K562 (cell line): ENCODE measurements at regions of chr6 and their contacts with region 1.

Region 1: DNA sequence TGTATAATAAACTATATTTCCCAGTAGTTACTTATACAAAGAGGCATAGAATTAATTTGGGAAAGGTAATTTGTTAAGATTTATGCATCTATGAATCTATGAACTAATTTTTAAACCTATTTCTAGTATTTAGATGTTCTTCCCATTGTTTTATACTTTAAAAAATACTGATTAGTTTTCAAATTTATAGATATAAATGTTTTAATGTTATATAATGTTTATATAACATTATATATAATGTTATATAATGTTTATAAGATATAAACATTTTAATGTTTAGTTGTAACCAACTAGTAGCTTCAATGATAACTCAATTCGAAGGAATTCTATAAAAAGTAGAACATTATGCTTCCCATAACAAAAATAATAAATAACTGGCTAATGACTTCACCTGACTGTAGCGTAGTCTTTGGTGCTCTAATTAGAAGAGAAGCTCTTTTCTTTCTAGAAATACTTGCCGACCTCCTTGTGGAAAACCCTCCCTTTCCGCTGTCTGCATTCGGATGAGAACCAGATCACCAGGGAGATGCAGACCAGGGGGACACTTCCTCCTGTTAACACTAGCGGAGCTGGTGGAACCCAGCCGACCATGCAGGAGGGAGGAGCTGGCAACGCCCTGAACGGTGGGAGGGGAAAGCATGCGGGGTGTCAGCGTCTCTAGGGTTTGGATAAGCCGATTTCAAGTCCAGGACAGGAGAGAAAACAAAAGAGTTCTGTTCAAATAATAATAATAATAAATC is 158.4 kb downstream of the OR2B2 start:
- DNase-seq: peak; percentile 84 to 98 (median 89)
- ATAC-seq: peak; percentile 93
- H3K4me3 ChIP-seq: peak overlapping the region; percentile 67
- H3K27ac ChIP-seq: peak overlapping the region; percentile 44; the same call in 2 of the 3 replicates
- H3K4me1 ChIP-seq: peaks cover 14 to 16% of the 10 kb centered on the region in 2 experiments; a peak in 4 of 5 replicates
- H3K27me3 ChIP-seq: no peaks in the 10 kb centered on the region
- CTCF ChIP-seq: peak; percentile 49 to 61 (median 55)
- EP300 ChIP-seq: peak; percentile 13
- POLR2A ChIP-seq: peak; percentile 67
- RAD21 ChIP-seq: peak in 1 of 2 experiments; percentile 30; a peak in 1 of 4 replicates

Region 2: GRCh38 chr6:27188885-27189418 is 564.9 kb before region 1 on chr6:
- CTCF ChIA-PET with region 1: interaction called, 4 read pairs
- POLR2A ChIA-PET with region 1: no interaction called
- in situ Hi-C with region 1: no loop called
- intact Hi-C with region 1: loop called (anchors 1 kb)
- DNase-seq: peak; percentile 69 to 93 (median 78)
- ATAC-seq: peak; percentile 85
- H3K4me3 ChIP-seq: peak overlapping the region; percentile 56
- H3K27ac ChIP-seq: peak overlapping the region; percentile 80
- H3K4me1 ChIP-seq: peaks cover 8% of the 10 kb centered on the region in 2 experiments; a peak in 4 of 5 replicates
- H3K27me3 ChIP-seq: no peaks in the 10 kb centered on the region
- CTCF ChIP-seq: peak; percentile 78 to 92 (median 85)
- EP300 ChIP-seq: no peak; the same call in 1 of the 2 replicates
- POLR2A ChIP-seq: no peak
- RAD21 ChIP-seq: peak; percentile 93 to 95

Region 3: GRCh38 chr6:27518881-27519795 is 234.7 kb before region 1 on chr6:
- CTCF ChIA-PET with region 1: interaction called, 11 read pairs
- POLR2A ChIA-PET with region 1: interaction called, 3 read pairs
- in situ Hi-C with region 1: no loop called
- intact Hi-C with region 1: loop called (anchors 1 kb)
- DNase-seq: peak; percentile 66 to 93 (median 69)
- ATAC-seq: peak; percentile 89
- H3K4me3 ChIP-seq: peak overlapping the region; percentile 69
- H3K27ac ChIP-seq: peak overlapping the region; percentile 82
- H3K4me1 ChIP-seq: peaks cover 4 to 7% of the 10 kb centered on the region in 2 experiments; a peak in 3 of 5 replicates
- H3K27me3 ChIP-seq: no peaks in the 10 kb centered on the region
- CTCF ChIP-seq: peak; percentile 77 to 90 (median 86)
- EP300 ChIP-seq: peak; percentile 63
- POLR2A ChIP-seq: peak; percentile 66
- RAD21 ChIP-seq: peak; percentile 76 to 80

Region 4: DNA sequence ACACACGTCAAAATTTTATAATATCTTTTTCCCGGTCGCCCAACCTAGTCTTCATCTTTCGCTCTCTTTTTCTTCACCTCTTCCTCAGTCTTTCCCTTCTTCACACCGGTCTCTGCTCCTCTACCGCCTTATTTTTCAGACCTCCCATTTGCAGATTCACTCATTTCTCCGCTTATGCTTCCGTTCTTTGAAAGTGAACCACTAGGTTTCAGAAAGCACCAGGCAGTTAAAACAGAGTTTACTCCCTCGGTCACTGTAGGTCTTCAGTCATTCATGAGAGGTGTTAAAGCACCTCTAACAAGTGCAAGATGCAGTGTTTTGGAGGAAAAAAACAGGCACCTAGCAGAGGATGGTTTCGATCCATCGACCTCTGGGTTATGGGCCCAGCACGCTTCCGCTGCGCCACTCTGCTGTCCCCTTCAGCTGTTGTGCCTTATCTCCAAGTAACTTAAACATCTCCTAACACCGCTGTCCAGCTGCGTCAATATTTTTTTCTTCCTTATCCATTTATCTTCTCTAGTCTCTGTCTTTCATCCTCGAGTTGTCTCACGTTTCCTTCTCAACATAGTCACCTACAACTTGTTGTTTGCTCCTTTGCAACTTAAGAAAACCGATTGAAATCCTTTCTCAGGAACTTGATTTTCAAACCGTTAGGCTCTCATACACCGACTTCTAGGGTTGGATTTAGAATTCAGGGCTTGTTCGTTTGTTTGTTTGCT is 161.2 kb before region 1 on chr6:
- CTCF ChIA-PET with region 1: interaction called, 4 read pairs
- POLR2A ChIA-PET with region 1: no interaction called
- in situ Hi-C with region 1: no loop called
- intact Hi-C with region 1: loop called (anchors 2 kb)
- DNase-seq: peak; percentile 76 to 94 (median 86)
- ATAC-seq: peak; percentile 94
- H3K4me3 ChIP-seq: peak overlapping the region; percentile 48
- H3K27ac ChIP-seq: peak overlapping the region; percentile 53
- H3K4me1 ChIP-seq: peaks cover 8 to 13% of the 10 kb centered on the region in 2 experiments; a peak in 4 of 5 replicates
- H3K27me3 ChIP-seq: no peaks in the 10 kb centered on the region
- CTCF ChIP-seq: peak in 1 of 3 experiments; percentile 20; a peak in 2 of 6 replicates
- EP300 ChIP-seq: peak; percentile 84
- POLR2A ChIP-seq: no peak
- RAD21 ChIP-seq: peak; percentile 33 to 47; a peak in 3 of 4 replicates

Region 5: DNA sequence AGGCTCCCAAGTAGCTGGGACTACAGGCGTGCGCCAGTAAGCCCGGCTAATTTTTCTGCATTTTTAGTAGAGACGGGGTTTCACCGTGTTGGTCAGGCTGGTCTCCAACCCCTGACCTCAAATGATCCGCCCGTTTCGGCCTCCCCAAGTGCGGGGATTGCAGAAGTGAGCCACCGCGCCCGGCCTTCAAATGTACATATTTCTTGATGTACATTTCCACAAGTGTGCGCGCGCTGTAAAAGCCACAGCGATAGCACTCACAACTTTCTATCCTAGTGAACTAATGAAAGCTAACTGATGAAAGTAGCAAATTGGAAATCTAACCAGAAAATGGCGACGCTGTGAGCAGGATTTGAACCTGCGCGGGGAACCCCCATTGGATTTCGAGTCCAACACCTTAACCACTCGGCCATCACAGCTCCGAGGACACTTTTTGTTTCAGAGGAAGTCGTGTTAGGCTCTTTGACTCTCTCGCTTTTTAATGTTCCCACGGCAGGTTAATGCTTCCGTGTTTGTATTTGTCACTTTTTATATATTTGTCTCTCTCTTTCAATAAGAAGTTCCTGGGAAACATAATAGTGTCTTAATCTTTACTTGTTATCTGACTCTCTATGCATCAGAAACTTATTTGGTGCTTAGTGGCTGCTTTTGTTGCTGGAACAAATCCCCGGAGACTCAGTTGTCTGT is 81.6 kb before region 1 on chr6:
- CTCF ChIA-PET with region 1: no interaction called
- POLR2A ChIA-PET with region 1: no interaction called
- in situ Hi-C with region 1: no loop called
- intact Hi-C with region 1: loop called (anchors 2 kb)
- DNase-seq: peak; percentile 59 to 96 (median 70)
- ATAC-seq: peak; percentile 72
- H3K4me3 ChIP-seq: peak overlapping the region; percentile 53
- H3K27ac ChIP-seq: peak overlapping the region; percentile 82
- H3K4me1 ChIP-seq: peaks cover 7% of the 10 kb centered on the region in 2 experiments; a peak in 4 of 5 replicates
- H3K27me3 ChIP-seq: no peaks in the 10 kb centered on the region
- CTCF ChIP-seq: no peak
- EP300 ChIP-seq: peak; percentile 70
- POLR2A ChIP-seq: no peak
- RAD21 ChIP-seq: peak in 1 of 2 experiments; percentile 31; a peak in 2 of 4 replicates

Region 6: GRCh38 chr6:27700337-27700736 is 53.5 kb before region 1 on chr6:
- CTCF ChIA-PET with region 1: no interaction called
- POLR2A ChIA-PET with region 1: no interaction called
- in situ Hi-C with region 1: no loop called
- intact Hi-C with region 1: no loop called
- DNase-seq: no peak
- ATAC-seq: no peak
- H3K4me3 ChIP-seq: no peak overlapping the region
- H3K27ac ChIP-seq: no peak overlapping the region
- H3K4me1 ChIP-seq: no peaks in the 10 kb centered on the region
- H3K27me3 ChIP-seq: no peaks in the 10 kb centered on the region
- CTCF ChIP-seq: no peak
- EP300 ChIP-seq: no peak
- POLR2A ChIP-seq: no peak
- RAD21 ChIP-seq: no peak

Region 7: GRCh38 chr6:27772261-27773001 is 18.6 kb after region 1 on chr6:
- CTCF ChIA-PET with region 1: no interaction called
- POLR2A ChIA-PET with region 1: interaction called, 17 read pairs
- in situ Hi-C with region 1: no loop called
- intact Hi-C with region 1: no loop called
- DNase-seq: peak; percentile 83 to 95 (median 84)
- ATAC-seq: peak; percentile 92
- H3K4me3 ChIP-seq: no peak overlapping the region
- H3K27ac ChIP-seq: peak overlapping the region; percentile 75
- H3K4me1 ChIP-seq: peaks cover 22 to 40% of the 10 kb centered on the region in 2 experiments
- H3K27me3 ChIP-seq: no peaks in the 10 kb centered on the region
- CTCF ChIP-seq: peak; percentile 97 to 99 (median 97)
- EP300 ChIP-seq: peak; percentile 35
- POLR2A ChIP-seq: no peak
- RAD21 ChIP-seq: peak; percentile 94 to 97

Region 8: DNA sequence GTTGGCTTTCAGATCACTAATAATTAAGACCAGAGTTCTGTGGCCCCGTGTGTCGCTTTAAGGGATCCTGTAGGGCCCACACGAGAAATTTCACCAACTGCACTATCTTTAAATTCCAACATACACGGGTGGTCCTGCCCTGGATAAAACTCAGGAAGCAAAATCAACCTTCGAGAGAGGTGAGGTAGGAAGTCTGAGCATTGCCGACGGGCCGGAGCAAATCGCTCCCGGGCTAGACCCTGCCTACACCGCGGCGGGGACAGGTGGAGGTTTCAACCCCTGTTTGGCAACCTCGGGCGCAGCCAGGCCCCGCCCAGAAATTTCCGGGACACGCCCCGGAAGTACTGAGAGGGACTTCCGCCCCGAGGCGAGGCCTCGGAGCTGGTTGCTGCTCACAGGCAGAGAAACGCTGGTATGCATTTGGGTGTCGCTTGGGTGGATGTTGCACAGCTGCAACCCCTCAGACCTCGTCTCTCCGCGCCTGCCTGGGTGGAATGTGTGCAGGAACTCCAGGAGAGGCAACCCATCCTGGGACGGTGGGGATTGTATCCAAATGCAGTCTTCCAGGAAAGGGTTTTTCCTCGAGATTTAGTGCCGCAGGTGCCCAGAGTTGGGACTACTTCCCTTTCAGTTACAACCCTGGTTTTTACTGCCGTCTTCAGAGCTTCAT is 407.7 kb after region 1 on chr6:
- CTCF ChIA-PET with region 1: no interaction called
- POLR2A ChIA-PET with region 1: no interaction called
- in situ Hi-C with region 1: no loop called
- intact Hi-C with region 1: no loop called
- DNase-seq: peak; percentile 89 to 95 (median 92)
- ATAC-seq: peak; percentile 98
- H3K4me3 ChIP-seq: peak overlapping the region; percentile 43
- H3K27ac ChIP-seq: peak overlapping the region; percentile 34
- H3K4me1 ChIP-seq: peaks cover 5 to 8% of the 10 kb centered on the region in 2 experiments
- H3K27me3 ChIP-seq: no peaks in the 10 kb centered on the region
- CTCF ChIP-seq: no peak
- EP300 ChIP-seq: no peak
- POLR2A ChIP-seq: peak; percentile 92
- RAD21 ChIP-seq: no peak